CD4-positive, alpha-beta T cell (primary cell): ENCODE measurements at regions of chr9 and their contacts with region 1.

Region 1: DNA sequence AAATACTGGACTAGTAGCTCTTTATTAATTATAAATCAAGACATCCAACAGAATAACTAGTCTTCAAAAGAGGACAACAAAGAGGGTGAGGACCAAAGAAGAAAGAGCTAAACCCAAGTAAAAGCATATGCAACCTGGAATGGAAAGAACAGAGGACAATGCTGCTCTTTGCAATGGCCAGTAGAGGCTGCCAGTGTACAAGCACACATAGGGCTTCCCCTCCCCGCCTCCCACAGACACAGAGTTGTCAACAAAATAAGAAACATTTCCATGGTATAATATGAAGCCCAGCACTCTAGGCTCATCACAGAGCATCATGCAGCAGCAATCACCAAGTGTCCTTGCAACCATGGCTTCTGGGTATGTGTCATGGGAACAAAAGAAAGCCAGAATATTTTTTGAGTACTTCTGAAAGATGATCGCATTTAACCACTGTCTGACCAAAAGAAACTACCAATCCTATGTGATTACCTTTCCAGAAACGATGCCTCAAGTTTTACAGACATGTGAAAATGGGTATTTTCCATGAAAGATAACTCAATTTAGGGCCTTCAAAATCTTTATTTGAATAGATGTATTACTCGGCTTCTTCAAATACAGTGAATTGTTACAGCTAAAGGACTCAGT is 58.1 kb downstream of the RFX3 start:
- DNase-seq: peak; percentile 34 to 82 (median 53)
- ATAC-seq: peak; percentile 100
- H3K4me3 ChIP-seq: no peak overlapping the region
- H3K4me3 Mint-ChIP-seq: no peak overlapping the region
- H3K27ac ChIP-seq: no peak overlapping the region
- H3K27ac Mint-ChIP-seq: no peak overlapping the region
- H3K4me1 ChIP-seq: peaks cover 3% of the 10 kb centered on the region
- H3K4me1 Mint-ChIP-seq: peaks cover 6% of the 10 kb centered on the region
- H3K27me3 ChIP-seq: no peaks in the 10 kb centered on the region
- H3K27me3 Mint-ChIP-seq: no peaks in the 10 kb centered on the region
- CTCF ChIP-seq: peak; percentile 88

Region 2: GRCh38 chr9:3398232-3398648 is 69.5 kb before region 1 on chr9:
- CTCF ChIA-PET with region 1: no interaction called
- POLR2A ChIA-PET with region 1: no interaction called
- intact Hi-C with region 1: no loop called
- DNase-seq: peak in 4 of 14 experiments; percentile 18 to 48 (median 40)
- ATAC-seq: peak; percentile 77
- H3K4me3 ChIP-seq: no peak overlapping the region
- H3K4me3 Mint-ChIP-seq: peak overlapping the region; percentile 67
- H3K27ac ChIP-seq: peak overlapping the region; percentile 42 to 53
- H3K27ac Mint-ChIP-seq: peak overlapping the region; percentile 87
- H3K4me1 ChIP-seq: peaks cover 6% of the 10 kb centered on the region
- H3K4me1 Mint-ChIP-seq: peaks cover 45% of the 10 kb centered on the region
- H3K27me3 ChIP-seq: no peaks in the 10 kb centered on the region
- H3K27me3 Mint-ChIP-seq: no peaks in the 10 kb centered on the region
- CTCF ChIP-seq: no peak

Region 3: GRCh38 chr9:3419893-3420292 is 47.8 kb before region 1 on chr9:
- CTCF ChIA-PET with region 1: no interaction called
- POLR2A ChIA-PET with region 1: no interaction called
- intact Hi-C with region 1: no loop called
- DNase-seq: no peak
- ATAC-seq: no peak
- H3K4me3 ChIP-seq: no peak overlapping the region
- H3K4me3 Mint-ChIP-seq: no peak overlapping the region
- H3K27ac ChIP-seq: no peak overlapping the region
- H3K27ac Mint-ChIP-seq: no peak overlapping the region
- H3K4me1 ChIP-seq: no peaks in the 10 kb centered on the region
- H3K4me1 Mint-ChIP-seq: peaks cover 11% of the 10 kb centered on the region
- H3K27me3 ChIP-seq: no peaks in the 10 kb centered on the region
- H3K27me3 Mint-ChIP-seq: no peaks in the 10 kb centered on the region
- CTCF ChIP-seq: no peak

Region 4: GRCh38 chr9:3647652-3648051 is 179.9 kb after region 1 on chr9:
- CTCF ChIA-PET with region 1: interaction called, 3 read pairs
- POLR2A ChIA-PET with region 1: no interaction called
- intact Hi-C with region 1: loop called in 1 of 2 experiments (anchors 5 kb)
- DNase-seq: peak in 3 of 14 experiments; percentile 6 to 17 (median 17)
- ATAC-seq: no peak
- H3K4me3 ChIP-seq: no peak overlapping the region
- H3K4me3 Mint-ChIP-seq: no peak overlapping the region
- H3K27ac ChIP-seq: no peak overlapping the region
- H3K27ac Mint-ChIP-seq: no peak overlapping the region
- H3K4me1 ChIP-seq: no peaks in the 10 kb centered on the region
- H3K4me1 Mint-ChIP-seq: no peaks in the 10 kb centered on the region
- H3K27me3 ChIP-seq: no peaks in the 10 kb centered on the region
- H3K27me3 Mint-ChIP-seq: no peaks in the 10 kb centered on the region
- CTCF ChIP-seq: peak; percentile 11

Region 5: GRCh38 chr9:4117835-4118610 is 650.3 kb after region 1 on chr9:
- CTCF ChIA-PET with region 1: no interaction called
- POLR2A ChIA-PET with region 1: no interaction called
- intact Hi-C with region 1: loop called (anchors 2 to 5 kb)
- DNase-seq: peak; percentile 11 to 58 (median 28)
- ATAC-seq: no peak
- H3K4me3 ChIP-seq: no peak overlapping the region
- H3K4me3 Mint-ChIP-seq: no peak overlapping the region
- H3K27ac ChIP-seq: no peak overlapping the region
- H3K27ac Mint-ChIP-seq: no peak overlapping the region
- H3K4me1 ChIP-seq: no peaks in the 10 kb centered on the region
- H3K4me1 Mint-ChIP-seq: no peaks in the 10 kb centered on the region
- H3K27me3 ChIP-seq: no peaks in the 10 kb centered on the region
- H3K27me3 Mint-ChIP-seq: no peaks in the 10 kb centered on the region
- CTCF ChIP-seq: peak; percentile 48

Region 6: GRCh38 chr9:4339357-4339756 is 871.7 kb after region 1 on chr9:
- CTCF ChIA-PET with region 1: no interaction called
- POLR2A ChIA-PET with region 1: no interaction called
- intact Hi-C with region 1: loop called (anchors 10 kb)
- DNase-seq: peak; percentile 65 to 85 (median 75)
- ATAC-seq: peak; percentile 94
- H3K4me3 ChIP-seq: no peak overlapping the region
- H3K4me3 Mint-ChIP-seq: peak overlapping the region; percentile 26
- H3K27ac ChIP-seq: no peak overlapping the region
- H3K27ac Mint-ChIP-seq: peak overlapping the region; percentile 44
- H3K4me1 ChIP-seq: peaks cover 4% of the 10 kb centered on the region
- H3K4me1 Mint-ChIP-seq: peaks cover 7% of the 10 kb centered on the region
- H3K27me3 ChIP-seq: no peaks in the 10 kb centered on the region
- H3K27me3 Mint-ChIP-seq: no peaks in the 10 kb centered on the region
- CTCF ChIP-seq: peak; percentile 85